ENCODE measurements at regions of chr19 and their contacts with region 1.

Region 1: DNA sequence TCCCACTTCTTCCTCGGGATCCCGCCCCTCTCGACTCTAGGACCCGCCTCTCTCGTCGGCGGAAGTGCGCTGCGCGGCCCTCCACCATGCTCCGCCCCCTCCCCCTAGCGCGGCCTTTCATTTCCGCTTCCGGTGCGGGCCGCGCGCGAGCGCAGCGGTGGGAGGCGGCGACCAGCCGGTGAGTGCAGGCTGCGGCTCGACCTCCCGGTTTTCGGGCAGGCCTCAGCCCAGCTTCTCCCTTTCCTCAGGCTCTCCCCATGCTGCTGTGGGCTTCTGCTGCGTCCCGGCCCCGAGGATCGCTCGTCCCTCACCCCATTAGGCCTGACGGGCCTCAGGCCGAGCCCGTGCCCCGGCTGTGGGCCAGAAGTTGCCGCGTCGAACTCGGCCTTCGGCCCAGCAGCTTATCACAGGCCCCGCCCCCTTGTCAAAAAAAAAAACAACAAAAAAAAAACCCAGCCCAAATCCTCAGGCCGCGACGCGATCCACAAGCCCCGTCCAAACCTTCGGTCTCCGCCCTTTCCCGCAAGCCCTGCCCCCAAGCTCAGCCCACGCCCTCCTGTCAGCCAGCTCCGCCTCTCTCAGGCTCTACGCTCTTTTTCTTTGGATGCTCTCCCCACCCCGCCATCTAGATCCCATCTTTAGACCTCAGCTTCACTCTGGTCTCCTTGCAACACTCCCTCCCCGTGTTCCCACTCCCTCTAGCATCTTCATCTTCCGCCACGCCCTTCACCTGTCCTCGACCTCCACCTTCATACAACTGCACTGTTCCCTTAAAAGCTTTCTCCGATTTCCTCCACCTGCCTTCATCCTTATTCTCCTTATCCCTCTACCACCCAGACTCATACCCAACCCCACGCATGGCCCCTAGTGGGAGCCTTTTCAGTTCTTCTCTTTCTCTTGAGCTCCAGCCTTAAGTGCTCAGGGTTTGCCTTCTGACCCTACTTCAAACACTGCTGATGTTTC is at the start of gene CLASRP:
- DNase-seq: peak; percentile 80 to 86
- ATAC-seq: peak; percentile 97 to 98
- H3K4me3 ChIP-seq: peak within 1 kb of the TSS; percentile 87 to 97 (median 94)
- H3K27ac ChIP-seq: peak within 1 kb of the TSS; percentile 90 to 98 (median 94)
- H3K4me1 ChIP-seq: peaks cover 25 to 33% of the 10 kb centered on the region in 2 donors
- H3K27me3 ChIP-seq: no peaks in the 10 kb centered on the region
- CTCF ChIP-seq: no peak
- POLR2A ChIP-seq: peak; percentile 94 to 98
- total RNA-seq, gene CLASRP: 28.8 to 121 (median 91.5) TPM

Region 2: DNA sequence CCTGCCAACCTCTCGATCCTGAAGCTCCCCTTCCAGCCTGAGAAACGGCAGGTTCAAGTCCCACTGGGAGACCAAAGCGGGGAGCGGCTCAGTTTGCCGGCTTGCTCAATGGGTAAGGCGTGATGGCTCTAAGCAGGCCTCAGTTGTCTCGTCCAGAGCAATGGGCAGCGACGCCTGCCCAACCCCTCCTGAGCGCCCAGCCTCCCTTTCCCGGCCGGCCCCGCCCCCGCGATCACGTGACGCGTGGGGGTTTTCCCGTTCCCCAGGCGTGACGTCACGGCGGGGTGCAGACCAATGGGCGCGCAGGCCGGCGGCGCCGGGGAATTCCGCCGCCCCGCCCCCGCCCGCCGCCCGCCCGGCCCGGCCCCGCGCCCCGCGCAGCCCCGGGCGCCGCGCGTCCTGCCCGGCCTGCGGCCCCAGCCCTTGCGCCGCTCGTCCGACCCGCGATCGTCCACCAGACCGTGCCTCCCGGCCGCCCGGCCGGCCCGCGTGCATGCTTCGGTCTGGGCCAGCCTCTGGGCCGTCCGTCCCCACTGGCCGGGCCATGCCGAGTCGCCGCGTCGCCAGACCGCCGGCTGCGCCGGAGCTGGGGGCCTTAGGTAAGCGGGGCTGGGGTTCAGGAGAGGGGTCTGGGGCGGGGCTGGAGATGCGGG is 38.0 kb before region 1 on chr19 and contains the start of gene RELB:
- in situ Hi-C with region 1: no loop called
- intact Hi-C with region 1: loop called (anchors 2 kb)
- DNase-seq: peak; percentile 88 to 92
- ATAC-seq: peak; percentile 80 to 84
- H3K4me3 ChIP-seq: peak within 1 kb of the TSS; percentile 74 to 95 (median 92)
- H3K27ac ChIP-seq: peak within 1 kb of the TSS; percentile 98 to 100 (median 100)
- H3K4me1 ChIP-seq: peaks cover 0 to 8% of the 10 kb centered on the region in 2 donors
- H3K27me3 ChIP-seq: no peaks in the 10 kb centered on the region
- CTCF ChIP-seq: peak in 1 of 5 experiments; percentile 18
- POLR2A ChIP-seq: no peak
- total RNA-seq, gene RELB: 8.4 to 21.5 (median 12.9) TPM

Region 3: DNA sequence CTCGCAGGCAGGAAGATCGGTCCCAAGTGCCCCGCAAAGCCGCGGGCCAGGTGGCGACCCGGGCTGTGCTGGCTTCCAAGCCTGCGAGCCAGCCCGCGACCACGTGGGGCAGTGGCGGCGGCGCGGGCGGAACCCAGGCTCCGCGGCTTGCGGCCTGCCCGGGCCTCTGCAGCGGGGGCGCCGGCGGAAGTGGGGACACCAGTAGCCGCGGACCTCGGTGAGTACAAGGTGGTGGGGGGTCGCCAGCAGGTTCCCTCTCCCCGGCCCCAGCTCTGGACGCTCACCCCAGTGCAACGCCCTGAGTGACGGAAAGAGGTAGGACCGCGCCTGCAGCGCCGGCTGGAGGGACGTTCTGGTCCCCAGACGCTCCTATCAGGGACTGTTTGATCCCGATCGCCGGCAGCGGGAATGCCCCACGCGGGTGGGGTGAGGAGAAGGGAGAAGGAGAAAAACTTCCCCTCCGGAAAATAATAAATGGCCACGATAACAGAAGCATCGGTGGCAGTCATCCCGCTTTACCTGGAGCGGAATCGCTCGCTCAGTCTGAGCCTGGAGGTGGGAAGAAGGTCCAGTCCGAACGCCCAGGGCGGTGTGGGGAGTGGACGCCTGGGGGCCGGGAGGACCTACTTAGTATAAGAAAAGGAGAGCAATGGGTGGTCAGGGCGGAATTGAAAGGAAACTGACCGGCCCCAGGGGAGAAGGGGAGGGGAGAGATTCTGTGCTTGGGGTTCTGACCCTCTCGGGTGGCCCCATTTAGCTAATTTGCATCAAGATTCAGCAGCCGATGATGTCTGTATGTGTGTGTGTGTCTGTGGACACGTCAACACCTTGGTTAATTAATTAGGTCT is 40.1 kb after region 1 on chr19 and contains the start of gene GEMIN7:
- in situ Hi-C with region 1: no loop called
- intact Hi-C with region 1: loop called (anchors 2 kb)
- DNase-seq: peak; percentile 51 to 71
- ATAC-seq: peak; percentile 79 to 81
- H3K4me3 ChIP-seq: peak within 1 kb of the TSS; percentile 77 to 95 (median 86)
- H3K27ac ChIP-seq: peak within 1 kb of the TSS; percentile 84 to 95 (median 90)
- H3K4me1 ChIP-seq: peaks cover 21 to 22% of the 10 kb centered on the region in 2 donors
- H3K27me3 ChIP-seq: no peaks in the 10 kb centered on the region
- CTCF ChIP-seq: peak in 2 of 5 experiments; percentile 15 to 20
- POLR2A ChIP-seq: peak in 1 of 2 donors; percentile 61
- total RNA-seq, gene GEMIN7: 18.6 to 33.4 (median 27.9) TPM

Measured in gastrocnemius medialis (tissue), 4 donors.